CD8-positive, alpha-beta memory T cell (primary cell): ENCODE measurements at regions of chr13 and their contacts with region 1.

Region 1: GRCh38 chr13:113208424-113209335 is at the start of gene PCID2:
- DNase-seq: peak; percentile 83 to 93 (median 88)
- H3K4me3 ChIP-seq: peak within 1 kb of the TSS; percentile 84
- H3K4me3 Mint-ChIP-seq: peak within 1 kb of the TSS; percentile 88 to 98 (median 92)
- H3K27ac ChIP-seq: peak within 1 kb of the TSS; percentile 93
- H3K27ac Mint-ChIP-seq: peak within 1 kb of the TSS; percentile 87 to 98 (median 95)
- H3K4me1 ChIP-seq: peaks cover 69% of the 10 kb centered on the region
- H3K4me1 Mint-ChIP-seq: peaks cover 39 to 56% (median 42%) of the 10 kb centered on the region in 3 donors
- H3K27me3 ChIP-seq: no peaks in the 10 kb centered on the region
- H3K27me3 Mint-ChIP-seq: no peaks in the 10 kb centered on the region
- total RNA-seq, gene PCID2: 60.1 to 62.3 TPM

Region 2: DNA sequence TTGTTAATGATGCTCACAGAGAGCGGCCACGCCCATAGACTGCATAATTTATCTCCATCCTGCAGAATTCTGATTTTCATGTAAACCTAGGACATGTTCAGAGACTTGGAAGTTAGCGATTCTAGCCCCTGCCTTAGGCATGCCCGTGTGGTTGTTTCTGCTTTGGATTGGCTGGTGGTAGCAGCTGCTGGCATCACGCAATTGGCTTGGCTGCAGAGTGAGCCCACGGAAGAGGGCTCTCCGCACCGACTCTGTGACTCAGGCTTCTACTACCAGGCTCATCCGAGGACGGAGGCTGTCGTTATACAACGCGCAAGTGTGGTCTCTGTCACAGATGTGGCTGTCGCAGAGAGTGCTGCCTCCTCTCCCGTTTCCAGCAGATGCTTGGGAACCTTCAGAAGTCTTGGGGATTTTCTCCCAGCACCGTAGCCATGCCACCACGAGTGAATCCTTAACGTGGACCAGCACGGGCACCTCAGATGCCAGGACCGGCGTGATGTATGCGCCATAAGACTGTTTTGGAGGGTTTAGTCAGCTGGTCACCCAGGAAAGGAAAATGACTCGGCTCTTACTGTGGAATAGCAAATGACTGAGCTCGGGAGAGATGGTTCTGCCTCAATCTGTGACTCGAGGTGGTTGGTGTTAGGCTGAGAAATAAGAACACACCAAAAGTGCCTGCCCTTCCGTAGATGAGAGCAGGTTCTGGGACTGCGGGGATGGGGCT is 164.1 kb before region 1 on chr13:
- CTCF ChIA-PET with region 1: no interaction called
- POLR2A ChIA-PET with region 1: no interaction called
- DNase-seq: no peak
- H3K4me3 ChIP-seq: no peak overlapping the region
- H3K4me3 Mint-ChIP-seq: no peak overlapping the region
- H3K27ac ChIP-seq: no peak overlapping the region
- H3K27ac Mint-ChIP-seq: no peak overlapping the region
- H3K4me1 ChIP-seq: no peaks in the 10 kb centered on the region
- H3K4me1 Mint-ChIP-seq: peaks cover 0 to 5% (median 0%) of the 10 kb centered on the region in 3 donors
- H3K27me3 ChIP-seq: no peaks in the 10 kb centered on the region
- H3K27me3 Mint-ChIP-seq: no peaks in the 10 kb centered on the region

Region 3: DNA sequence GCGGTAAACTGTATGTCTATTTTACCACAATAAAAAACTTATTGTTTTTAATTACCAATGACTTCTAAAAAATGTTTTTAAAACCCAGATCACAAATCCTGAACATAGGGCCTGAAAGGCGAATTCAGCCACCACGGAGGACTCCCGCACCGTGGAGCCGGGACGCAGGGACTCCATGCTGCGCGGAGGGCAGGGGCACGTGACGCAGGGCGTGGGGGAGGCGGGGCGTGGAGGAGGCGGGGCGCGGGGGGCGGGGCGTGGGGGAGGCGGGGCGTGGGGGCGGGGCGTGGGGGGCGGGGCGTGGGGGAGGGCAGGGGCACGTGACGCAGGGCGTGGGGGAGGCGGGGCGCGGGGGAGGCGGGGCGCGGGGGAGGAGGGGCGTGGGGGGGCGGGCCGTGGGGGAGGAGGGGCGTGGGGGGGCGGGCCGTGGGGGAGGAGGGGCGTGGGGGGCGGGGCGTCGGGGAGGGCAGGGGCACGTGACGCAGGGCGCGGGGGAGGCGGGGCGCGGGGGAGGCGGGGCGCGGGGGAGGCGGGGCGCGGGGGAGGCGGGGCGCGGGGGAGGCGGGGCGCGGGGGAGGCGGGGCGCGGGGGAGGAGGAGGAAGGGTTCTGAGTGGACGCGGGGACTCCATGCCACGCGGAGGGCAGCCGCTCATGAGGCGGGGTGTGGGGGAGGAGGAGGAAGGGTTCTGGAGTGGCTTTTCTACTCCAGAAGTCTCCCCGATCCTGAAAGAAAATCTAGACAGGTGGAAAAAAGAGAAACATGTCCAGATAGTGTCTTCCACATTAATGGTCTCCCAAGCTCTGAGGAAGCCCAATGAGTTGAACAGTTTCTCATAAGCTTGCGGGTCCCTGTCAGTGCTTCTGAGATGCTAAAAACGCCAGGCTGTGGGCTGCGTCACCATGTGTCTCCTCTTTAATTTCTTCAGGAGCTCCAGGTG is 54.6 kb before region 1 on chr13:
- CTCF ChIA-PET with region 1: no interaction called
- POLR2A ChIA-PET with region 1: interaction called, 10 read pairs
- DNase-seq: peak; percentile 70 to 87 (median 72)
- H3K4me3 ChIP-seq: peak overlapping the region; percentile 66
- H3K4me3 Mint-ChIP-seq: peak overlapping the region; percentile 77 to 93 (median 84)
- H3K27ac ChIP-seq: peak overlapping the region; percentile 14
- H3K27ac Mint-ChIP-seq: peak overlapping the region; percentile 68 to 97 (median 92)
- H3K4me1 ChIP-seq: peaks cover 14% of the 10 kb centered on the region
- H3K4me1 Mint-ChIP-seq: peaks cover 17 to 27% (median 22%) of the 10 kb centered on the region in 3 donors
- H3K27me3 ChIP-seq: no peaks in the 10 kb centered on the region
- H3K27me3 Mint-ChIP-seq: peaks cover 0 to 1% of the 10 kb centered on the region in 2 donors

Region 4: DNA sequence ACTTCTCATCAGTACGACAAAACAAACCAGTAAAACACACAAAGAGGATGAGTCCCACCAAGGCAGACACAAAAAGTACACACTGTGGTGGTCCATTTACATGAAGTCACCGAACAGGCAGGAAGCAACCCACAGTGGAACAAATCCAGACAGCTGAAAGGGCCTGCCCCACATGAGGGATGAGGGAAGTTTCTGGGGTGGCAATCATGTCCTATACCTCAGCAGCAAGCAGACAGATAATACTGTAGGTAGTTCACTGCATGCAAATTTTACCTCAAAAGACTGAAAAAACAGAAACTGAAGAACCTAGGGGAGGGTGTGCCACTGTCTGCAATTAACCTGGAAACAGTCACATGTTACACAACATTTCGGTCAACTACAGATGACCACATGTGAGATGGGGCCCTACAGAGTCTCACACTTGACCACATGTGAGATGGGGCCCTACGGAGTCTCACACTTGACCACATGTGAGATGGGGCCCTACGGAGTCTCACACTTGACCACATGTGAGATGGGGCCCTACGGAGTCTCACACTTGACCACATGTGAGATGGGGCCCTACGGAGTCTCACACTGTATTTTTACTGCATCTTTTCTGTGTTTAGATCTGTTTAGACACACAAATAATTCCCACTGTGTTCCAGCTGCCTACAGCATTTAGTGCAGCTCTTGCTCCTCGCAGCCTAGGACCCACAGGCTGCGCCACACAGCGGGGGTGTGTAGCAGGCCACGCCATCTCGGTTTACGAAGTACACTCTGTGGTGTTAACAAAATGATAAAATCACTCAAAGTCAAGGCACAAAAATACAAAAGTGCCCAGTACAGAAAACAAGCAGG is 22.4 kb before region 1 on chr13:
- CTCF ChIA-PET with region 1: no interaction called
- POLR2A ChIA-PET with region 1: interaction called, 16 read pairs
- DNase-seq: peak in 1 of 5 donors; percentile 37
- H3K4me3 ChIP-seq: no peak overlapping the region
- H3K4me3 Mint-ChIP-seq: peak overlapping the region; percentile 51 to 86 (median 79)
- H3K27ac ChIP-seq: no peak overlapping the region
- H3K27ac Mint-ChIP-seq: peak overlapping the region; percentile 89 to 98 (median 92)
- H3K4me1 ChIP-seq: peaks cover 39% of the 10 kb centered on the region
- H3K4me1 Mint-ChIP-seq: peaks cover 61 to 75% (median 62%) of the 10 kb centered on the region in 3 donors
- H3K27me3 ChIP-seq: no peaks in the 10 kb centered on the region
- H3K27me3 Mint-ChIP-seq: peaks cover 0 to 2% of the 10 kb centered on the region in 2 donors

Region 5: GRCh38 chr13:113267642-113268405 is 59.1 kb after region 1 on chr13:
- CTCF ChIA-PET with region 1: no interaction called
- POLR2A ChIA-PET with region 1: no interaction called
- DNase-seq: no peak
- H3K4me3 ChIP-seq: no peak overlapping the region
- H3K4me3 Mint-ChIP-seq: no peak overlapping the region
- H3K27ac ChIP-seq: no peak overlapping the region
- H3K27ac Mint-ChIP-seq: no peak overlapping the region
- H3K4me1 ChIP-seq: no peaks in the 10 kb centered on the region
- H3K4me1 Mint-ChIP-seq: no peaks in the 10 kb centered on the region
- H3K27me3 ChIP-seq: no peaks in the 10 kb centered on the region
- H3K27me3 Mint-ChIP-seq: no peaks in the 10 kb centered on the region

Region 6: GRCh38 chr13:113567681-113568080 is 359.0 kb after region 1 on chr13:
- CTCF ChIA-PET with region 1: no interaction called
- POLR2A ChIA-PET with region 1: no interaction called
- DNase-seq: no peak
- H3K4me3 ChIP-seq: no peak overlapping the region
- H3K4me3 Mint-ChIP-seq: peak overlapping the region in 1 of 7 donors; percentile 5
- H3K27ac ChIP-seq: no peak overlapping the region
- H3K27ac Mint-ChIP-seq: peak overlapping the region in 1 of 8 donors; percentile 53
- H3K4me1 ChIP-seq: no peaks in the 10 kb centered on the region
- H3K4me1 Mint-ChIP-seq: peaks cover under 1 to 2% (median under 1%) of the 10 kb centered on the region in 3 donors
- H3K27me3 ChIP-seq: no peaks in the 10 kb centered on the region
- H3K27me3 Mint-ChIP-seq: peaks cover 13 to 59% of the 10 kb centered on the region in 2 donors